ENCODE measurements at regions of chr12 and their contacts with region 1.

Region 1: DNA sequence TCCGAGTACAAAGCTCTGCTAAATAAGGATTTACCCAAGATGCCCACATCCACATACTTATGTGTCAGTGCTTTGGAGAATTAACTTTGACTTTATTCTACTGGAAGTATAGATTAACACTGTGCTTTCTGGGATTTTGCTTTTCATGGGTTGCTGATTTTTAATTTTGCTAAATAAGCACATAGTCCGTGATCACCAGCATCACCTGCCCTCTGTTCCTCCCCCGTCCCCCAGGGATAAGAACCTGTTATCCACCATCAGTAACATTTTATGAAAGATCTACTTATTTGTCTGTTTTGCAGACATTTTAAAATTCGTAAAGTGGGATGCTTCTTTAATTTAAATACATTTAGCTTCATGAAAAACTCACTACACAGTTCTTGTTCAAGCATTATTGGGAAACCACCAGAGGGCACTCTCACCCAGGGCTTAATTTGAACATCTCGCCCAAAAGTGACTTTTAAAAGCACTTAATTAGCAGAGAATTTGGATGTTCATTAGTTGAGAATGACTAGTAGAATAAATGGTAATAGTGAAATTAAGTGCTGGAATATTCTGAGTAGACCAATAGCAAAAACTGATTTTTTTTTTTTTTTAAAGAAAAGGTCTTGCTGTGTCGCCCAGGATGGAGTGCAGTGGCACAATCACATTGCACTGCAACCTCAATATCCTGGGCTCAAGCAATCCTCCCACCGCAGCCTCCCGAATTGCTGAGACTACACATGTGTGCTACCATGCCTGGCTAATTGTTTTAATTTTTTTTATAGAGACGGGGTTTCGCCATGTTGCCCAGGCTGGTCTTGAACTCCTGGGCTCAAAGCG is 35.7 kb downstream of the MRPL42 start:
- DNase-seq: peak; percentile 33
- ATAC-seq: no peak
- H3K4me3 ChIP-seq: no peak overlapping the region
- H3K27ac ChIP-seq: no peak overlapping the region
- H3K4me1 ChIP-seq: no peaks in the 10 kb centered on the region
- H3K27me3 ChIP-seq: no peaks in the 10 kb centered on the region
- CTCF ChIP-seq: peak; percentile 59
- EP300 ChIP-seq: no peak
- POLR2A ChIP-seq: no peak
- RAD21 ChIP-seq: peak; percentile 42; the same call in 1 of the 2 replicates

Region 2: GRCh38 chr12:93563807-93564538 is 61.0 kb after region 1 on chr12:
- CTCF ChIA-PET with region 1: interaction called, 10 read pairs
- POLR2A ChIA-PET with region 1: no interaction called
- in situ Hi-C with region 1: loop called (anchors 10 kb)
- intact Hi-C with region 1: loop called (anchors 2 kb)
- DNase-seq: peak; percentile 100
- ATAC-seq: peak; percentile 99
- H3K4me3 ChIP-seq: peak overlapping the region in 1 of 3 experiments; percentile 27; a peak in 1 of 6 replicates
- H3K27ac ChIP-seq: peak overlapping the region; percentile 82
- H3K4me1 ChIP-seq: peaks cover 39% of the 10 kb centered on the region
- H3K27me3 ChIP-seq: no peaks in the 10 kb centered on the region
- CTCF ChIP-seq: peak; percentile 46
- EP300 ChIP-seq: peak; percentile 98 to 99
- POLR2A ChIP-seq: no peak; a peak in 1 of 4 replicates
- RAD21 ChIP-seq: peak; percentile 42; the same call in 1 of the 2 replicates

Region 3: DNA sequence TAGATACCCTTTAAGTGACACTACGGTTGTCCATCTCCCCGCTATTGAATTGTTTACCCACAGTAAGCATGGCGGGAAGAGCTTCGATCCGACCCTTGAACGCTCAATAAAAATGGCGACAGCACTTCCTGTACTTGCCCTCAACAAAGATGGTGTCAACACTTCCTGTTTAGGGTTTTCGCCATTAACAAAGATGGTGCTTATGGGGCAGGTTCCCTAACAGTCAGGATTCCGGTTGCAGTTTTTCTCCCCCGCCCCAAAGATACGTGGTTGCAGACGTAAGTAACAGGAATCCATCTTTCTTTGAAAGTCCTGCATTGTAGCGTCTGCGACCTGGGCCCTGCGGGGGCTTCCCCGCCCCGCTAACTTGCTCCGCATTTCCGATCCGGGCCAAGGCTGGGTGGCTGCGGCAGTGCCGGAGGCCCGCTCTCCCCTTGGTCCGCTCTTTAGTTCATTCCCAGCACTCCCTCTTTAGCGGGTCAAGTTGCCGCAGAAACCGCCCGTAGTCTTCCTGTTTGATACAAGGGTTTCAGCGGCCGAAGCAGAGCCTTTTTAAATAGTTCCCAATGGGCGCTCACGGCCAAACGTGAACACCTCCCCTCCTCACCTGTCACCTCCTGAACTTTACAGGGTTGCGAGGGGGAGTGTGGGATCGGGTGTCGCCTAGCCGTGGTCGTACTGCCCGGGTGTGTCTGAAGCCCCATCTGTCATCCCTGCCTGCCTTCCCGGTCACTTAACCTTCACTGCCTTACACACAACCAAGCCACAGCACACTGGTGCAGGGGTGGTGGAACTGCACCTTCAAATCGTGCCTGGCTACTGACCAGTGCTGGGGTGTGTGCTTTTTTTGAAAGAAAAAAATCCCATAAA is 174.4 kb after region 1 on chr12 and contains the start of gene CRADD:
- CTCF ChIA-PET with region 1: no interaction called
- POLR2A ChIA-PET with region 1: no interaction called
- in situ Hi-C with region 1: no loop called
- intact Hi-C with region 1: loop called (anchors 2 kb)
- DNase-seq: peak; percentile 98
- ATAC-seq: peak; percentile 93
- H3K4me3 ChIP-seq: peak within 1 kb of the TSS; percentile 70 to 87 (median 71)
- H3K27ac ChIP-seq: peak within 1 kb of the TSS; percentile 98
- H3K4me1 ChIP-seq: peaks cover 35% of the 10 kb centered on the region
- H3K27me3 ChIP-seq: no peaks in the 10 kb centered on the region; a peak in 1 of 5 replicates
- CTCF ChIP-seq: peak; percentile 3; the same call in 1 of the 2 replicates
- EP300 ChIP-seq: 0 out of 4 replicates have a peak, but pooled peaks of 1 of the 2 experiments have one; percentile 52
- POLR2A ChIP-seq: peak; percentile 67 to 90; a peak in 3 of 4 replicates
- RAD21 ChIP-seq: no peak; the same call in 1 of the 2 replicates
- total RNA-seq, gene CRADD: 18.8 and 22.3 TPM in 2 replicates

Region 4: GRCh38 chr12:93839064-93839463 is 336.1 kb after region 1 on chr12:
- CTCF ChIA-PET with region 1: no interaction called
- POLR2A ChIA-PET with region 1: no interaction called
- in situ Hi-C with region 1: no loop called
- intact Hi-C with region 1: loop called (anchors 5 kb)
- DNase-seq: no peak
- ATAC-seq: no peak
- H3K4me3 ChIP-seq: no peak overlapping the region
- H3K27ac ChIP-seq: no peak overlapping the region
- H3K4me1 ChIP-seq: peaks cover 9% of the 10 kb centered on the region
- H3K27me3 ChIP-seq: no peaks in the 10 kb centered on the region; a peak in 1 of 5 replicates
- CTCF ChIP-seq: no peak
- EP300 ChIP-seq: no peak
- POLR2A ChIP-seq: no peak
- RAD21 ChIP-seq: no peak

Region 5: GRCh38 chr12:94074980-94075928 is 572.2 kb after region 1 on chr12:
- CTCF ChIA-PET with region 1: no interaction called
- POLR2A ChIA-PET with region 1: no interaction called
- in situ Hi-C with region 1: no loop called
- intact Hi-C with region 1: loop called (anchors 10 kb)
- DNase-seq: peak; percentile 60
- ATAC-seq: peak; percentile 81
- H3K4me3 ChIP-seq: no peak overlapping the region
- H3K27ac ChIP-seq: no peak overlapping the region
- H3K4me1 ChIP-seq: peaks cover 63% of the 10 kb centered on the region
- H3K27me3 ChIP-seq: no peaks in the 10 kb centered on the region
- CTCF ChIP-seq: peak; percentile 64
- EP300 ChIP-seq: no peak
- POLR2A ChIP-seq: no peak
- RAD21 ChIP-seq: 0 out of 2 replicates have a peak, but pooled peaks have one; percentile 28